ENCODE measurements at regions of chr3 and their contacts with region 1.

Region 1: GRCh38 chr3:124895756-124896155 is 8.6 kb upstream of the ITGB5 start:
- DNase-seq: no peak
- H3K4me3 ChIP-seq: no peak overlapping the region
- H3K4me3 Mint-ChIP-seq: no peak overlapping the region
- H3K27ac Mint-ChIP-seq: no peak overlapping the region
- H3K4me1 ChIP-seq: peaks cover 3% of the 10 kb centered on the region
- H3K4me1 Mint-ChIP-seq: peaks cover 15% of the 10 kb centered on the region
- H3K27me3 ChIP-seq: no peaks in the 10 kb centered on the region
- H3K27me3 Mint-ChIP-seq: no peaks in the 10 kb centered on the region
- CTCF ChIP-seq: no peak

Region 2: DNA sequence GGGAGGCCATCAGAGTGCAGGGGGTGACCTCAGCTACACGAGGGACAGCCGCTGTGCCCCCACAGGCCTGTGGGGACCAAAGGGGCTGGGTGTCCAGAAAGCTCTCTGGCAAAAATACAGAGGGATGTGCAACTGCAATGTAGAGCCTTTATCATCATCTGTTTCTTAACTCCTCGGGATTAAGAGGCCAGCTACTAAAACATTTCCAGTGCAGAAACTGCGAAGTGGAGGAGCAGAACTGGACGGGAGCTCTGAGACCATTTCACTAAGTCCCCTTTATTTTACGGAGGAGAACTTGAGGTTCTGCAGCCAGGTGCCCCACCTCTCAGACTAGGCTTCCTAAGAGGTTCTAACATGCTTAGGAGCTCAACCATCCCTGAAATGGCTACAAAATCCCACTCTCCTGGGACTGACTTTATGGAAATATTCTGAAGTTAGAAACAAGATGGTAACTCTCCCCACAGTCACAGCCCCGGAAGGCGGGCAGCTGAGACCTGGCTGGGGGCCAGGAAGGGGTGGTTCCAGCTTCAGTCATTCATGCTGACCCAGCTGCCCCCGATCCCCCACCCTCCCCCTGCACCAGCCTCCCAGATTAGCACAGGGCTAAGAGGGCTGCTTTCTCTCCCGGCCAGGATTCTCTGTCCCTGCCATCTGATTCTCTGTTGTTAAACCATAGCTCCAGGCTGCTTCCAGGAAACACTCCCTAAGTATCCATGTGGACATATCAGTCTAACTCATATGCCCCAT is 125.2 kb before region 1 on chr3:
- CTCF ChIA-PET with region 1: interaction called, 12 read pairs
- POLR2A ChIA-PET with region 1: no interaction called
- intact Hi-C with region 1: no loop called
- DNase-seq: no peak
- H3K4me3 ChIP-seq: no peak overlapping the region
- H3K4me3 Mint-ChIP-seq: no peak overlapping the region
- H3K27ac Mint-ChIP-seq: no peak overlapping the region
- H3K4me1 ChIP-seq: peaks cover 11% of the 10 kb centered on the region
- H3K4me1 Mint-ChIP-seq: peaks cover 15% of the 10 kb centered on the region
- H3K27me3 ChIP-seq: no peaks in the 10 kb centered on the region
- H3K27me3 Mint-ChIP-seq: no peaks in the 10 kb centered on the region
- CTCF ChIP-seq: no peak

Region 3: GRCh38 chr3:125403789-125404188 is 508.0 kb after region 1 on chr3:
- CTCF ChIA-PET with region 1: no interaction called
- POLR2A ChIA-PET with region 1: no interaction called
- intact Hi-C with region 1: no loop called
- DNase-seq: no peak
- H3K4me3 ChIP-seq: no peak overlapping the region
- H3K4me3 Mint-ChIP-seq: no peak overlapping the region
- H3K27ac Mint-ChIP-seq: no peak overlapping the region
- H3K4me1 ChIP-seq: peaks cover 10% of the 10 kb centered on the region
- H3K4me1 Mint-ChIP-seq: peaks cover 7% of the 10 kb centered on the region
- H3K27me3 ChIP-seq: no peaks in the 10 kb centered on the region
- H3K27me3 Mint-ChIP-seq: no peaks in the 10 kb centered on the region
- CTCF ChIP-seq: no peak